ENCODE measurements at regions of chr3 and their contacts with region 1.

Region 1: GRCh38 chr3:183766745-183767606 is 58.4 kb downstream of the MAP6D1 start:
- DNase-seq: peak in 4 of 5 donors; percentile 74 to 87 (median 77)
- H3K4me3 ChIP-seq: no peak overlapping the region
- H3K27ac ChIP-seq: no peak overlapping the region
- H3K4me1 ChIP-seq: no peaks in the 10 kb centered on the region
- H3K27me3 ChIP-seq: no peaks in the 10 kb centered on the region
- CTCF ChIP-seq: peak; percentile 84

Region 2: DNA sequence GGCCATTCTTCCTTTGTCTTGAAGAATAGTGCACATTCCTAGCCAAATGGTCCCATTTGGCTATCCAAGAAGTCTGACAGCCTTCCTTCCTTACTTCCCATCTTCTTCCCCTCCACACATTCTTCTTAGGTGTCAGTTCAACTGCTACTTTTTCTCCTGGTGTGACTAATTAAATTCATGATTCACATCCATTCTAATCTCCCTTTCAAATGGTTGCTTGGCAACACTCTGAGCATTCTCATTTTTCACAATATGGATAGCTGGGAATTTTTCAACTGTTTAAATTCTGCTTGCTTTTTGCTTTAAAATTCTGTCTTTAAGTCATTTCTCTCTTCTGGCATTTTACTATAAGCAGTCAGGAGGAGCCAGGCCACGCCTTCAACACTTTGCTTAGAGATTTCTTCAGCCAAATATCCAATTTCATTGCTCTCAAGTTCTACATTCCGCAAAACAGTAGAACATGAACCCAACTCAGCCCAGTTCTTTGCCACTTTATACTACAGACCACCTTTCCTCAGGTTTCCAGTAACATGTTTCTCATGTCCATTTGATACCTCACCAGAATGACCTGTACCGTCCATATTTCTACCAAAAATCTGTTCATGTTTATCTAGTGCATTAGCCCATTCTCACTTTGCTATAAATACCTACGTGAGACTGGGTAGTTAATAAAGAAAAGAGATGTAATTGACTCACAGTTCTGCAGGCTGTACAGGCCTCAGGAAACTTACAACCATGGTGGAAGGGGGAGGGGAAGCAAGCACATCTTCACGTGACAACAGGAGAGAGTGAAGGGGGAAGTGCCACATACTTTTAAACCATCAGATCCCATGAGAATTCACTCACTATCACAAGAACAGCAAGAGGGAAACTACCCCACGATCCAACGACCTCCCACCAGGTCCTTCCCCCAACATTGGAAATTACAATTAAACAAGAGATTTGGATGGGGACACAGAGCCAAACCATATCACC is 306.6 kb before region 1 on chr3:
- intact Hi-C with region 1: loop called (anchors 10 kb)
- DNase-seq: no peak
- H3K4me3 ChIP-seq: no peak overlapping the region
- H3K27ac ChIP-seq: no peak overlapping the region
- H3K4me1 ChIP-seq: no peaks in the 10 kb centered on the region
- H3K27me3 ChIP-seq: no peaks in the 10 kb centered on the region
- CTCF ChIP-seq: no peak

Region 3: DNA sequence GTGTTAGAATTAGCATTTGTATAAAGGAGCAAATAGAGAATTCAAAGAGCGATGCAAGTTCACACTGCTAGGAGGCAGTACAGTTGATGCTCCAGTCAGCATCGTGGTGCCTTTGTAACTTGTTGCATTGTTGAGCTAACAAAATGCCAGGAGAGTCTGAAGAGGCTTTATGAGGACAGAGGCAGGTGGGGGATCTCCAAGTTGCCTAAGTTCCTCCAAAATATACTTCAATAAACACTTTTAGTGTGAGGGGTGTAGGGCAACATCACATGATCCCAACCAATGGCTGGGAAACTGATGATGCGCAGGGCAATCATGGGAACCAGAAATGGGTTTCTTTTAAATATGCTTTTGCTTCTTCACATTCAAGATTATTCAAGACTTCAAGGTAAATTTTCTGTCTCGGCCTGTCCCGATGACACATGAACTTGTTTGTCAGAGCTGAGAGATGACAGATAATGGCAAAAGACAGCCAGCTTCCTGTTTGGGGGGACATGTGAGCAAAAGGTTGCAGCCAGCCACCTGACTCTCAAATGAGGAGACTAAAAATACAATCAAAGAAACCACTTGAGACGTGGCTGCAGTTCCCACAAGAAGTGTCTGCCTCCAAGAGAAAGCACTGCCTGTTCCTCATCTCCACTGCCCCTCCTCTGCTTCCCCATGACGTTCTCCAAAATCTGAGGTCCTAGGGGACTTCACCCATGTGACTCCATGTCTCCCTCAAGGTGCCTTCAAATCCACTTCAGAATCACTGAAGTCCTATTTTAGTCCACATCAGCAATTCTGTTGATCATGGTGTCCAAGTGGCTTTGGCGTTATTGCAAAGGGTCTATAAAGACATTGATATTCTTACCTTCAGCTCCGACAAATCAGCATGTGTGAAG is 250.8 kb before region 1 on chr3:
- intact Hi-C with region 1: no loop called
- DNase-seq: no peak
- H3K4me3 ChIP-seq: no peak overlapping the region
- H3K27ac ChIP-seq: no peak overlapping the region
- H3K4me1 ChIP-seq: no peaks in the 10 kb centered on the region
- H3K27me3 ChIP-seq: no peaks in the 10 kb centered on the region
- CTCF ChIP-seq: no peak

Measured in kidney (tissue), 22 donors.